ENCODE measurements at regions of chr20 and their contacts with region 1.

Region 1: GRCh38 chr20:12925214-12925755 is 83.5 kb upstream of the SPTLC3 start:
- DNase-seq: peak in 9 of 10 donors; percentile 45 to 76 (median 56)
- H3K4me3 ChIP-seq: peak overlapping the region in 8 of 59 donors; percentile 15 to 33 (median 24)
- H3K27ac ChIP-seq: no peak overlapping the region
- H3K27me3 ChIP-seq: no peaks in the 10 kb centered on the region
- CTCF ChIP-seq: peak; percentile 82 to 99 (median 94)

Region 2: DNA sequence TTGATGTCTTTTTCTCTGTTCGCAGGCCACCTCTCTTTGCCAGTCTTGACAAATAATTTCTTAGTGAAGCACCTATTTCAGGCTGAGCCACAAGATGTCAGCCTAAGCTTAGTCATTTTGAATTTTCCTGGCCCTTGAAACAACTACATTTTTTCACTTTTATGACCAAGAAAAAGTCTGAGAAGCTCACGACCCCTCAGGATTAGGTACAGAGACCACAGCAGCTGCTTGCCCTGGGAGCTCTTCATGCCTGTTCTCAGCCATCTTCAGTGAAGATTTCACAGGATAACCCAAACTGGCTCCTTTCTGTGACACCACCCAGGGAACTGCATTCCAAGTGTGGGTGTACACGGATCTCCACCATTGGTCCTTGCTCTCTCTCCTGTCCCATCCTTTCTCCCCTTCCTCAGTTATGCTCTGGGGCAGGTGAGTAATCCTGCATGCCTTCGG is 45.1 kb after region 1 on chr20:
- intact Hi-C with region 1: loop called (anchors 2 to 5 kb)
- DNase-seq: no peak
- H3K4me3 ChIP-seq: no peak overlapping the region
- H3K27ac ChIP-seq: no peak overlapping the region
- H3K27me3 ChIP-seq: peaks cover 0 to 3% (median 0%) of the 10 kb centered on the region in 45 donors
- CTCF ChIP-seq: peak in 55 of 56 donors; percentile 34 to 79 (median 54)

Region 3: GRCh38 chr20:13105864-13106457 is 180.7 kb after region 1 on chr20:
- intact Hi-C with region 1: loop called (anchors 2 to 5 kb)
- DNase-seq: no peak
- H3K4me3 ChIP-seq: no peak overlapping the region
- H3K27ac ChIP-seq: no peak overlapping the region
- H3K27me3 ChIP-seq: peaks cover 0 to 6% (median 0%) of the 10 kb centered on the region in 45 donors
- CTCF ChIP-seq: peak; percentile 66 to 94 (median 80)